ENCODE measurements at regions of chr9 and their contacts with region 1.

Region 1: GRCh38 chr9:120868676-120869359 is 8.2 kb downstream of the PHF19 start:
- DNase-seq: peak; percentile 96 to 97
- H3K4me3 ChIP-seq: peak overlapping the region; percentile 50 to 83 (median 66)
- H3K27ac ChIP-seq: peak overlapping the region; percentile 88 to 93
- H3K4me1 ChIP-seq: no peaks in the 10 kb centered on the region
- H3K27me3 ChIP-seq: no peaks in the 10 kb centered on the region
- CTCF ChIP-seq: peak; percentile 24 to 44 (median 31)
- POLR2A ChIP-seq: no peak

Region 2: DNA sequence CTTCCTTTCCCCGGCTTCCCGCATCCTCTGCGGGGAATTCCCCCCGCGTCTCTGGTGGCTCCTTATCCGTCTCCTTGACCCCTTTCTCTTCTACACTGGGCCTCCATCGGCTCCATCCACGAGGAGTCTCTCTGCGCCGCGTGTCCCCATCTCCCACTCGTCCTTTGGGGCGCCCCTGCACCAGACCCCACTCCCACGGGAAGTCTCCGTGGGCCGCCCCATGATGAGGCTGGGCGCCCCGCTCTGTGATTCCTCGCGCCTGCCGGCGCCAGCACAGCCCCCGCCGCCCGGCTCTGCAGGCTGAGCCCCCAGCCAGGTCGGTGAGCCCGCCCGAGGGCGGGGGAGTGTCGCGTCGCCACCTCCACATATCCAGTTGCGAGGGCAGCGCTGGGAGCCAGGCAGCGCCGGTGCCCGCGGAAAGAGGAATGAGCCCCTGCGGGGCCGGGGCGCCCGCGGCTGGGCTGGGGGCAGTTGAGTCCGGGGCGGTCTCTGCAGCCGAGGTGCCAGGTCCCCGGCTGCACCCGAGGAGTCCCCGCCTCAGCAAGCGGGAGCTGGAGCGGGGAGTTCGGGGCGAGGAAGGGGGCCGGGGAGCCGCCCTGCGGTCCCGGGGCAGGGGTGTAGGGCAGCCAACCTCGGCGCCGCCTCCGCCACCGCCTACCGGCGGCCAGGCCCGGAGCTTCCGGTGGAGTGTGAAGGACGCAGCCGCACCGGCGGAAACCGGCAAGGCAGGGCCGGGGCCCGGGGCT is 59.8 kb after region 1 on chr9:
- intact Hi-C with region 1: loop called (anchors 2 kb)
- DNase-seq: peak; percentile 53 to 66
- H3K4me3 ChIP-seq: peak overlapping the region; percentile 54 to 95 (median 79)
- H3K27ac ChIP-seq: peak overlapping the region; percentile 85 to 93
- H3K4me1 ChIP-seq: peaks cover 0 to 3% of the 10 kb centered on the region in 2 donors
- H3K27me3 ChIP-seq: no peaks in the 10 kb centered on the region
- CTCF ChIP-seq: no peak
- POLR2A ChIP-seq: no peak